Panc1 (cell line): ENCODE measurements at regions of chr5 and their contacts with region 1.

Region 1: DNA sequence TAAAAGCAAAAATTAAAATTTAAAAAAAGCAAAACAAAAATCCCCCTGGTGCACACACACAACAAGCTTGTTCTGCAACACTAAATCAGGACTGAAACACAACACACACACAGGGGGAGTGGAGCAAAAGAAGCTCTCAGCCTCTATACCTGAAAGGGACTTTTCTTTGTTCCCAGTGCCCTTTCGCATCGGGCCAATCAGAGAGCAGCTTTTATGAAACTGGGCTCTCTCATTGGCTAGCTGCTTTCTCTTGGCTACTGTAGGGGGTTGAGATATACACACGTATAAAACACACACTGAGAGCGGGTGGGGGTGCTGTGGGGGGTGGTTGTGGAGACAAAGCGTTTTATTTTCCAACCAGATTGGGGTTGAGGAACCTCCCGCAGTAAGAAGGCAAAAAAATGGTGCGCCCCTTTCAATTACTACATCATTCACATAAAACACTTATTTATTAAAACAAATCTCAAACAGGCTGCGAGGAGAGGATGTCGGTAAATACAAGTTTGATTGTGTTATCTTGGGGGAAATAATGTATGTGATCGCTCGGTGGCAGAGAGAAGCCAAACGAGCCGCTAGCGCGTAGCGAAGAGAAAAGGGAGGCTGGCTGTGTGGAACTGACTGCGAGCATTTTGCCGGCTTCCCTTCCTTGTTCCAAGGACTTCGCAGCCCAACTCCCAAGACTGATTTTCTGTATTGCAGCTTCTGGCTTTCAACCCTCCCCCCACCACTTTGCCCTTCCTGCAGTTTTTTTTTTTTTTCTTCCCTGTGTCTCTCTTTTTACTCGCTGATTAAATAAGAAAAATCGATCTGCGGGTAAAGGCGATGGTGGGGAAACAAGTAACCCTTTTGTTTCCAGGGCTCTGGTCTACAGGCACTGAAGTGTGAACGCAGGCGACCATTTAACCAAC is 2.5 kb upstream of the ZNF608 start:
- DNase-seq: peak; percentile 95
- ATAC-seq: peak; percentile 89
- H3K4me3 ChIP-seq: peak overlapping the region; percentile 79 to 82
- H3K27ac ChIP-seq: peak overlapping the region; percentile 100
- H3K4me1 ChIP-seq: peaks cover 32% of the 10 kb centered on the region
- H3K27me3 ChIP-seq: no peaks in the 10 kb centered on the region
- CTCF ChIP-seq: no peak

Region 2: GRCh38 chr5:124764992-124765611 is 16.2 kb after region 1 on chr5:
- CTCF ChIA-PET with region 1: interaction called, 4 read pairs
- POLR2A ChIA-PET with region 1: interaction called, 14 read pairs
- in situ Hi-C with region 1: no loop called
- intact Hi-C with region 1: no loop called
- DNase-seq: no peak
- ATAC-seq: no peak
- H3K4me3 ChIP-seq: no peak overlapping the region
- H3K27ac ChIP-seq: no peak overlapping the region
- H3K4me1 ChIP-seq: no peaks in the 10 kb centered on the region; the same call in 1 of the 2 replicates
- H3K27me3 ChIP-seq: no peaks in the 10 kb centered on the region
- CTCF ChIP-seq: no peak

Region 3: DNA sequence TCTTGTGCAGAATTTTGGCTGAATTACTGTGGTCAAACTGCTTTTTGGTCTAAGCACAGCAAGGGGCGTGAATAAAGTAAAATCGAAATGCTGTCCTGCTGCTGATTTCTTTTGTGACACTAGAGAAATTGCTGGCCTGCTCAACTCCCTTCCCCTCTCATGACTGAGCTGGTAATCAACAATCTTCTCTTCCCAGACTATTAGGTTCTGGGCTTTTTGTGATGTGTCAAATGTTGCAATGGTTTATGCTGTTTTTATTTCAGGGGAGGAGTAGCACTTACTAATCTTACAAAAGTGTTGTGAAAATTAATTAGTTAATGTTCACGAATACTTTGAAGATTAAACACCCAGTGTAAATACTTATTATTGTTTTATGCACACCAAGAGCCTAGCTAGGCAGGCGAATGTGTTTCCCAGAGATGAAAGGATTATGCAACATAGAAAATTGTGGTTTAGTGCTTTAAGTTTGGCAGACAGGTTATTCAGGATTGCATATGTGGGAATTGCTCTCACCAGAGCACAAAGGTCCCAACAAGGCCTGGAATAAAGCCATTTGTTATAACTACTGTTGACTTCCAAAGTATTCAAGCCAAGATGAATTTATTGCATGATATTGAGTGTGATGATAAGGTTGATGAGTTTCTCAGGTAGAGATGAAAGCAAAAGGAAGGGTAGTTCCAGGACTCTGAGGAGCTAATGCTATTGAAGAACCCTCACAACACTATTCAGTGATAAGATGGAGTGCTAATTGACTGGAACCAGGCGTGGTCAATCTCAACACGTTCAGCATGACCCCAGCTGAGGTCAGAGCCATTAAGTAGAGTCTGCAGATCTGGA is 278.2 kb after region 1 on chr5:
- CTCF ChIA-PET with region 1: no interaction called
- POLR2A ChIA-PET with region 1: no interaction called
- in situ Hi-C with region 1: no loop called
- intact Hi-C with region 1: no loop called
- DNase-seq: no peak
- ATAC-seq: no peak
- H3K4me3 ChIP-seq: no peak overlapping the region
- H3K27ac ChIP-seq: no peak overlapping the region; the same call in 1 of the 2 replicates
- H3K4me1 ChIP-seq: no peaks in the 10 kb centered on the region
- H3K27me3 ChIP-seq: no peaks in the 10 kb centered on the region
- CTCF ChIP-seq: no peak

Region 4: GRCh38 chr5:125043781-125044391 is 294.9 kb after region 1 on chr5:
- CTCF ChIA-PET with region 1: interaction called, 11 read pairs
- POLR2A ChIA-PET with region 1: no interaction called
- in situ Hi-C with region 1: no loop called
- intact Hi-C with region 1: no loop called
- DNase-seq: no peak
- ATAC-seq: peak; percentile 85
- H3K4me3 ChIP-seq: no peak overlapping the region
- H3K27ac ChIP-seq: peak overlapping the region; percentile 82
- H3K4me1 ChIP-seq: peaks cover 28% of the 10 kb centered on the region
- H3K27me3 ChIP-seq: no peaks in the 10 kb centered on the region
- CTCF ChIP-seq: no peak

Region 5: GRCh38 chr5:125134216-125135081 is 385.5 kb after region 1 on chr5:
- CTCF ChIA-PET with region 1: no interaction called
- POLR2A ChIA-PET with region 1: interaction called, 12 read pairs
- in situ Hi-C with region 1: no loop called
- intact Hi-C with region 1: no loop called
- DNase-seq: peak; percentile 25
- ATAC-seq: peak; percentile 65
- H3K4me3 ChIP-seq: no peak overlapping the region
- H3K27ac ChIP-seq: peak overlapping the region; percentile 51; the same call in 1 of the 2 replicates
- H3K4me1 ChIP-seq: no peaks in the 10 kb centered on the region; the same call in 1 of the 2 replicates
- H3K27me3 ChIP-seq: no peaks in the 10 kb centered on the region
- CTCF ChIP-seq: no peak

Region 6: DNA sequence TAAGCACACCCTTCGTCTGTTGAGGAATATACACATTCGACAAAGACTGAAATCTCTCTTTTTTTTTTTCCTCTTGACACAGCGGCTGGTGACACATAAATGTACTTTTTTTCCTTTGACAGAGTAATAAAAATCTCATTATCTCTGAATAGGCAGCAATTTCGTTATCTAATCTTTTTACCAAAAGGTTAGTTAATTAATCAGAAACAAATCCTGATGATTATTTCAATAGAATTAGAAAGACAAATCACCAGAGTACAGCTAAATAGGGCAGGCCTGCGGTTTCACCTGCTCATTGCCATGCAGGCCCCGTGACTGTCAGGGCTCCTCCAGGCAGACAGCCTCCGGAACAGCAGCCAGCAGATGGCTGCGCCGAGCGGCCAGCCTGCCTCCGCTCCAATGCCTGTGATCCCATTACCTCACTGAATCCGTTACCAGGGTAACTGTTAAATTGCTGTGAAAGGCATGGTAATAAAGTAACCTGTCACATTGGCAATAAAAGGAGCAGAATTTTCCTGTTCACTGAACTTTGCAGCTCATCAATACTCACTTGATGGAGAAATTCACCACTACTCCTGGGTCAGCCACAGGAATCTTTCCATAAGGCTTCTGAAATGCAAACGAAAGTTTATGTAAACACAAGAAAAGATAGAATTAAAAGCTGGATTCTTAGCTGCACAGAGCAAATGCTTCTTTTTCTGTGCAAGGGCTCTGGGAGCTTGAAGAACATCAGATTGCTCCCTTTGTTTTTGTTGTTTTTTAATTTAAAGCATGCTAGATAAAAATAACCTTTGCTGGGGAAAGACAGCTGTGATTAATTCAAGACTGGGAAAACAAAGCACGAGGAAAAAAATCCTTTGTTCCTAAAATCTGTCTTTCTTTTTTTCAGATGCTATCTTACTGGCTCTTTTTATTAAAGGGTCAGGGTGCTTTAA is 663.9 kb after region 1 on chr5:
- CTCF ChIA-PET with region 1: no interaction called
- POLR2A ChIA-PET with region 1: interaction called, 6 read pairs
- in situ Hi-C with region 1: no loop called
- intact Hi-C with region 1: loop called (anchors 5 kb)
- DNase-seq: no peak
- ATAC-seq: peak; percentile 80
- H3K4me3 ChIP-seq: peak overlapping the region; percentile 11 to 34; a peak in 3 of 4 replicates
- H3K27ac ChIP-seq: peak overlapping the region; percentile 95
- H3K4me1 ChIP-seq: peaks cover 67% of the 10 kb centered on the region
- H3K27me3 ChIP-seq: no peaks in the 10 kb centered on the region
- CTCF ChIP-seq: peak; percentile 83

Region 7: DNA sequence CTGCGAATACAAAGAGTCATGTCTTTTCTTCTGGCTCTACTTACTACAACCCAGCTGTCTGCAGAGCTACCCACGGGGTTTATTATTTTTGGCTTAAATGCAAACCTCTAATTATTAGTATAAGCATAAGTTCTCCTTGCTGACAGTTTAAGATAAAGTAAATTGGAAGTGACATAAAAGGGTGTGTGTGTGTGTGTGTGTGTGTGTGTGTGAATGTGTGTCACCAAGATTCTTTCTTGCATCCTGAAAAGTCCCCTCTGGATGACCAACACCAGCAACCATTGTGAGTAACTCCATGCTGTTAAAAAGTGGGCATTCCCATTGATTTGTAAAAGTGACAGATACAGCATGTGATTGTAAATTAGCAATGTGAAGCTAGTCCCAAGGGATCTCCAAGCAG is 801.3 kb after region 1 on chr5:
- CTCF ChIA-PET with region 1: no interaction called
- POLR2A ChIA-PET with region 1: no interaction called
- in situ Hi-C with region 1: no loop called
- intact Hi-C with region 1: loop called (anchors 10 kb)
- DNase-seq: no peak
- ATAC-seq: peak; percentile 79
- H3K4me3 ChIP-seq: no peak overlapping the region
- H3K27ac ChIP-seq: peak overlapping the region; percentile 94
- H3K4me1 ChIP-seq: peaks cover 29% of the 10 kb centered on the region
- H3K27me3 ChIP-seq: no peaks in the 10 kb centered on the region
- CTCF ChIP-seq: no peak